CD4-positive, alpha-beta T cell (primary cell): ENCODE measurements at regions of chr7 and their contacts with region 1.

Region 1: DNA sequence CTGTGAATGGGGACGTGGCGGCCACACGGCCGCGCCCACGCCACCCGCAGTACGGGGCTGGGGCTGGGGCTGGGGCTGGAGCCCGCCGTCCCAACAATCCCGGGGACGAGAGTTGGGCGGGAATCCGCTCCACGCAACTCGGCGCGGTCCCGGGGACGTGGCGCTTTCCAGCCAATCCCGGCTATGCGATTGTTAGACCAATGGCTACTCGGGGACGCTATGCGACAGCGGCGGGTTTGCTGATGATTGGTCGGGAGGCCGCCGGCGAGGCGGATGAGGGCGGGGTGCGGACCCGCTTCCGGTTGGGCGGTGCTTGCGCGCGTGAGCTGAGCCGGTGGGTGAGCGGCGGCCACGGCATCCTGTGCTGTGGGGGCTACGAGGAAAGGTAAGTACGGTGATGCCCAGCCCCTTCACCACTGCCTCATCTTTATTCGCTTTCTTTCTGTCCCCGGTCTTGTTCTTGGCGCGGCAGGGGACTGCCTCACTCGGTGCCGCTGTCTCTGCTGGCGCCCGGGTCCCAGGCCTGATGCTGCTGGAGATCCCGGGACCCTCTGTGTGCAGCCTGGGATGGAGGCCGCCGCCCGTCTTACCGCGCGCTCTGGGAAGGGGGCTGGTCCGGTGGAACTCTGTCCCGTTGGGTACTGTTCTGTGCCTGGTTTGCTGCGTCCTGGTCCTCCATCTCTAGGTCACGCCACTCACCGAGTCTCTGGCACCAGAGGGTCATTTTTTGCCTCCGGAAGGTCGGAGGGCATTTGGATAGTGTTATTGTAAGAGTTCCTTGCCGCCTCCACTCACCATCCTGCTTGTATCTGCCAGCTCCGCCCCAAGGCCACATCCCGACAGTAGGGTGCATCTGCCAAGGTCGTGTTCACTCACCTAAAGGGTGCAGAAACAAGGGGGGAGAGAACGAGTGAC is at the start of gene CALU:
- DNase-seq: peak; percentile 87 to 97 (median 91)
- ATAC-seq: peak; percentile 91
- H3K4me3 ChIP-seq: peak within 1 kb of the TSS; percentile 97
- H3K4me3 Mint-ChIP-seq: peak within 1 kb of the TSS; percentile 100
- H3K27ac ChIP-seq: peak within 1 kb of the TSS; percentile 80 to 93
- H3K27ac Mint-ChIP-seq: peak within 1 kb of the TSS; percentile 96
- H3K4me1 ChIP-seq: peaks cover 19% of the 10 kb centered on the region
- H3K4me1 Mint-ChIP-seq: peaks cover 46% of the 10 kb centered on the region
- H3K27me3 ChIP-seq: no peaks in the 10 kb centered on the region
- H3K27me3 Mint-ChIP-seq: no peaks in the 10 kb centered on the region
- CTCF ChIP-seq: no peak
- total RNA-seq, gene CALU: 28.4 to 29.9 TPM

Region 2: DNA sequence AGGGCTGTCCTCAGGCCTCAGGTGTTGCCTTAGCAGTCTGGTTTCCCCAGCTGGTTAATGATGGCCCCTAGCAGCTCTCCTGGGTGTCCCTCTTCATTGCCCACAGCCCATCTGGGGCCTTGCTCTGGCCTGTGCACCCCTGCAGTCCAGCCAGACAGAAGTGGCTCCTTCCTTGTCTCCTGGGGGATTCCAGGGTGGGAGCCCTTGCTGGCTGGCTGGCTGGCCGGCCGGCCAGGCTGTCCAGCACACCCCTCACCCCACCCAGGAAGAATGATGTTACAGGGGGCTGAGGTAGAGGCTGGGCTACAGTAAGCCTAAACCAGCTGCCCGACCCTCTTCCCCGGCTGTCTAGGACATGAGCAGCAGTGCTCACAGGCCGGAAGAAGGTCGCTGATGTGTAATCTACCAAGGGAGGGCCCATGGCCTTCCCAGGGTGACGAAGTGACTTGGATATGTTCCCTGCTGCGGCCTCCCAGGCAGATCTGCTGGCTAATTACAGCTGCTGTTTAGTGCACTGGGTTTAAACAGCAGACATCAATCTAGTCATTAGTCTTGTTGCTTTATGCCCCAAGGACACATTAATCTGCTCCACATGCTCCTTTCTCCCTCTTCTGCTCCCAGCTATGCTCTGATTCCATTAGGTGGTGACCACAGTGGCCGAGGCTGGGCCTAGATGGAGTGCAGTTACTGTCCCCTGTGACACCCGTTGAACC is 654.3 kb before region 1 on chr7:
- CTCF ChIA-PET with region 1: no interaction called
- POLR2A ChIA-PET with region 1: no interaction called
- intact Hi-C with region 1: no loop called
- DNase-seq: no peak
- ATAC-seq: no peak
- H3K4me3 ChIP-seq: no peak overlapping the region
- H3K4me3 Mint-ChIP-seq: no peak overlapping the region
- H3K27ac ChIP-seq: no peak overlapping the region
- H3K27ac Mint-ChIP-seq: no peak overlapping the region
- H3K4me1 ChIP-seq: no peaks in the 10 kb centered on the region
- H3K4me1 Mint-ChIP-seq: peaks cover 5% of the 10 kb centered on the region
- H3K27me3 ChIP-seq: no peaks in the 10 kb centered on the region
- H3K27me3 Mint-ChIP-seq: no peaks in the 10 kb centered on the region
- CTCF ChIP-seq: no peak

Region 3: GRCh38 chr7:128666200-128666599 is 73.1 kb before region 1 on chr7:
- CTCF ChIA-PET with region 1: no interaction called
- POLR2A ChIA-PET with region 1: no interaction called
- intact Hi-C with region 1: no loop called
- DNase-seq: peak in 1 of 14 experiments; percentile 11
- ATAC-seq: no peak
- H3K4me3 ChIP-seq: no peak overlapping the region
- H3K4me3 Mint-ChIP-seq: no peak overlapping the region
- H3K27ac ChIP-seq: no peak overlapping the region
- H3K27ac Mint-ChIP-seq: no peak overlapping the region
- H3K4me1 ChIP-seq: no peaks in the 10 kb centered on the region
- H3K4me1 Mint-ChIP-seq: no peaks in the 10 kb centered on the region
- H3K27me3 ChIP-seq: no peaks in the 10 kb centered on the region
- H3K27me3 Mint-ChIP-seq: no peaks in the 10 kb centered on the region
- CTCF ChIP-seq: peak; percentile 3

Region 4: GRCh38 chr7:128791121-128791961 is 52.0 kb after region 1 on chr7:
- CTCF ChIA-PET with region 1: no interaction called
- POLR2A ChIA-PET with region 1: interaction called, 23 read pairs
- intact Hi-C with region 1: loop called in 1 of 2 experiments (anchors 1 kb)
- DNase-seq: peak; percentile 57 to 90 (median 78)
- ATAC-seq: peak; percentile 88
- H3K4me3 ChIP-seq: peak overlapping the region; percentile 79
- H3K4me3 Mint-ChIP-seq: peak overlapping the region; percentile 88
- H3K27ac ChIP-seq: no peak overlapping the region
- H3K27ac Mint-ChIP-seq: no peak overlapping the region
- H3K4me1 ChIP-seq: peaks cover 22% of the 10 kb centered on the region
- H3K4me1 Mint-ChIP-seq: peaks cover 6% of the 10 kb centered on the region
- H3K27me3 ChIP-seq: no peaks in the 10 kb centered on the region
- H3K27me3 Mint-ChIP-seq: no peaks in the 10 kb centered on the region
- CTCF ChIP-seq: no peak

Region 5: DNA sequence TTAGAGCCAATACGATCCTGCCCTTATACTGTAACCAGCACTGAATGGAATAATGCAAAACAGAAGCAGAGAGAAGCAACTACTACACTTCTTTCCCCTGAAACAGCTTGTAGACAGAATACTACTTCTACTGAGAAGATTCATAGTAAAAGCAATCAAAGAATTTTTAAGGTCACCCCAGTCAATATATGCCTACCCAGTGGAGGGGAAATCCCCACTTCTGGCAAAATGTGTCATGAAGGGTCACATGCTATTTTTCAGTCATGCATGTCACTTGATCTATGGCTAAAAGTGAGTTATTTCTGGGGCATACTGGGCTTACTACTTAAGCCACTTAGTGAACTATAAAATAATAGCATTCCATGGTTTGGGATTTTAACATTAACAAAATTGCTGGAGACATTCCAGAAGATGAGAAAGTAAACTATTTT is 224.0 kb after region 1 on chr7:
- CTCF ChIA-PET with region 1: no interaction called
- POLR2A ChIA-PET with region 1: no interaction called
- intact Hi-C with region 1: no loop called
- DNase-seq: peak in 2 of 14 experiments; percentile 48 to 54
- ATAC-seq: peak; percentile 54
- H3K4me3 ChIP-seq: no peak overlapping the region
- H3K4me3 Mint-ChIP-seq: no peak overlapping the region
- H3K27ac ChIP-seq: no peak overlapping the region
- H3K27ac Mint-ChIP-seq: peak overlapping the region; percentile 34
- H3K4me1 ChIP-seq: no peaks in the 10 kb centered on the region
- H3K4me1 Mint-ChIP-seq: peaks cover 5% of the 10 kb centered on the region
- H3K27me3 ChIP-seq: no peaks in the 10 kb centered on the region
- H3K27me3 Mint-ChIP-seq: no peaks in the 10 kb centered on the region
- CTCF ChIP-seq: no peak

Region 6: DNA sequence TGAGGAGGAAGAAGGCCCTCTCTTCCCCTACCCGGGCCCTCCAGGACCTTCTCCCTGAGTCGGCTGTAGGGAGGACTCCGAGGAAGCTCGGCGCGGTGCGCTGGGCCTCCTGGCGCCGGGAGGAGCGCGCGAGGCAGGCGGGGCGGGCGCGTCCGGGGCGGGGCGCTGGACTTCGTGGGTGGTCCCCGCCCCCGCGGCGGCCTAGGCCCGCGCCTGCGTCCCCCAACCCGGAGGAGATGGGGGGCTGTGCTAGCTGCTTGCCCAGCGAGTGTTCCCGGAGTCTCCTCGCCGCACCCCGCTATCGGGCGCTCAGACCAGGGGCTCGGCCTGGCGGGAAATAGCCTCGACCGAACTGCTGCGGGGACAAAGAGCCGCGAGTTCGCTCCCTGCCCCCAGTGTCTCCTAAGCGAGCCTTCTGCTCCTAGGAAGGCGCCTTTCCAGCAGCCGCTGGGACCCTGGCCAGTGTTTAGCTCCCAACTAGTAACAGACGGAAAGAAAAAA is 429.9 kb after region 1 on chr7:
- CTCF ChIA-PET with region 1: no interaction called
- POLR2A ChIA-PET with region 1: no interaction called
- intact Hi-C with region 1: no loop called
- DNase-seq: peak in 9 of 14 experiments; percentile 16 to 52 (median 32)
- ATAC-seq: peak; percentile 74
- H3K4me3 ChIP-seq: peak overlapping the region; percentile 56
- H3K4me3 Mint-ChIP-seq: peak overlapping the region; percentile 83
- H3K27ac ChIP-seq: no peak overlapping the region
- H3K27ac Mint-ChIP-seq: no peak overlapping the region
- H3K4me1 ChIP-seq: peaks cover 13% of the 10 kb centered on the region
- H3K4me1 Mint-ChIP-seq: peaks cover 19% of the 10 kb centered on the region
- H3K27me3 ChIP-seq: no peaks in the 10 kb centered on the region
- H3K27me3 Mint-ChIP-seq: peaks cover 7% of the 10 kb centered on the region
- CTCF ChIP-seq: no peak